Heart right ventricle (tissue), 16 donors: ENCODE measurements at regions of chr18 and their contacts with region 1.

Region 1: DNA sequence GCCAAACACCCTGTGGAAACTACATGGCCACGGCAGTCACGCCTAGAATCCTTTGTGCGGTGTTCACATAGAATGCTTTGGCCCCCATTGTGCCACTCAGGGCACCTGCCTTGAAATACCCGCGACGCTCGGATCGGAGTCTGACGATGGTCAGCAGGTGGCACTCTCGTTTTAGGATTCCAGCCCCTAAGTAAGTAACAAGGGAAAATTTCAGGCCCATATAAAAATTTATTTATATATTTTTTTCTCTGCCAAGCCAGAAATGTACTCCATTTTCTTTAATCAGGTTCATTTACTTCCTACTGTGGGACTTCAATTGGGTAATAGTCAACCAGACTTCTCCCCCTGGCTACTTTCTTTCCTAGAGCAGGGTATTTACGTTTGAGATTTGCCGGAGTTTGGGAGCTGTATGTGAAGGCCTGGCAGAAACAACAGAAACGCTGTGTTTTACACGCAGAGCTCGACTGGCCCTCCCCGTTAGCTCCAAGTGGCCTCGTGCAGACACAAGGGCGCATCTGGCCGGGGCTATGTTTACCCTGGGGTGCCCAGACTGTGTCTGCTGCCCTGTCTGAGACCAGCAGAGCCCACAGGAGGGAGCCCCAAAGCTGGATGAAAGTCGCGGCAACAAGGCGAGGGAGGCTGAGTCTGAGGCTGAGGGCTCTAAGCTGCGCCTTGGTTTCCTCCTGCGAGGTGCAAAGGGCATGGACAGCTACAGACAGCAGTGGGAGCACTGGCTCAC is 41.6 kb downstream of the LRRC30 start:
- DNase-seq: peak; percentile 66 to 69
- ATAC-seq: peak; percentile 66 to 94 (median 88)
- H3K4me3 ChIP-seq: peak overlapping the region in 8 of 10 donors; percentile 15 to 39 (median 34)
- H3K27ac ChIP-seq: peak overlapping the region; percentile 61 to 87 (median 77)
- H3K4me1 ChIP-seq: peaks cover 7 to 26% (median 21%) of the 10 kb centered on the region in 9 donors
- H3K27me3 ChIP-seq: no peaks in the 10 kb centered on the region
- CTCF ChIP-seq: peak; percentile 39 to 74 (median 59)

Region 2: GRCh38 chr18:7370802-7371201 is 98.3 kb after region 1 on chr18:
- intact Hi-C with region 1: loop called in 6 of 10 experiments (anchors 2 to 10 kb)
- DNase-seq: peak; percentile 76 to 89
- ATAC-seq: peak; percentile 82 to 95 (median 91)
- H3K4me3 ChIP-seq: peak overlapping the region in 2 of 10 donors; percentile 7 to 29
- H3K27ac ChIP-seq: peak overlapping the region; percentile 53 to 94 (median 88)
- H3K4me1 ChIP-seq: peaks cover 16 to 81% (median 45%) of the 10 kb centered on the region in 9 donors
- H3K27me3 ChIP-seq: no peaks in the 10 kb centered on the region
- CTCF ChIP-seq: no peak

Region 3: GRCh38 chr18:7383002-7383980 is 110.8 kb after region 1 on chr18:
- intact Hi-C with region 1: no loop called
- DNase-seq: no peak
- ATAC-seq: peak in 7 of 8 donors; percentile 29 to 77 (median 55)
- H3K4me3 ChIP-seq: no peak overlapping the region
- H3K27ac ChIP-seq: peak overlapping the region in 8 of 10 donors; percentile 35 to 76 (median 63)
- H3K4me1 ChIP-seq: peaks cover 0 to 28% (median 11%) of the 10 kb centered on the region in 9 donors
- H3K27me3 ChIP-seq: no peaks in the 10 kb centered on the region
- CTCF ChIP-seq: no peak

Region 4: GRCh38 chr18:7459851-7460770 is 187.6 kb after region 1 on chr18:
- intact Hi-C with region 1: loop called in 4 of 10 experiments (anchors 10 kb)
- DNase-seq: peak in 1 of 2 donors; percentile 50
- ATAC-seq: peak in 7 of 8 donors; percentile 5 to 91 (median 40)
- H3K4me3 ChIP-seq: peak overlapping the region in 8 of 10 donors; percentile 7 to 33 (median 16)
- H3K27ac ChIP-seq: peak overlapping the region; percentile 1 to 81 (median 44)
- H3K4me1 ChIP-seq: peaks cover 0 to 44% (median 18%) of the 10 kb centered on the region in 9 donors
- H3K27me3 ChIP-seq: no peaks in the 10 kb centered on the region
- CTCF ChIP-seq: no peak

Region 5: DNA sequence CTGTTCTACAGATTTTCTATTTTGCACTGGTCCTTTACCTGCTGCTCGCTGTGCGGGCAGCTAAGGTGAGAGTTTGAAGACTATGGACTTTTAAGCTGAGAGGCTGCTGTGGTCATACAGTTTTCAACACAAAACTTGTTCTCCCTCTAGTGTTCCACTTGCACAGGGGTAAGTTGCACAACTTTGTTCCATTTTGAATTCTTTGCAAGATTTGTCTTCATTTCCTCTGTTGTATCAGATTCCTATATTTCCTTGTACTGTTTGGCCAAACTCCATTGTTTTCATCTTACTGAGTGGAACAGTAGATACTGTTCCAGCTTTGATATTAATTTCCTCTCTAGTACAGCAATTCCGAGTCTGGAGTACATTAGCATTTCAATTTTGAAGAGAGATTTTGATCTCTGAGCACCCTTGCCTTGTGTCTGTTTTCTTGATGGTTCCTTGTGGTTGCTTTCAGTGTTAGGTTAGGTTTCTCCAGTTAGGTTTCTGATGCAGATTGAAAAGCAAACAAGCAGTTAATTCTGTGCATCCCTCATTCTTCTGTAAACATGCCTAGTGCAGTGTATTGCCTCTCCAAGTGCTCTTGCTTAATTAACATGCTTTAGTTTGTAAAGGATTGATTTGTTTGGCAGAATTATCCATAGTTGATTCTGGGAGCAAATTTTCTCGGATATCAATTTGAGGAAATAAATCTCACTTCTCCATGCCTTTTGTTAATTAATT is 483.4 kb after region 1 on chr18:
- intact Hi-C with region 1: loop called in 5 of 10 experiments (anchors 5 to 10 kb)
- DNase-seq: no peak
- ATAC-seq: peak in 7 of 8 donors; percentile 41 to 77 (median 63)
- H3K4me3 ChIP-seq: no peak overlapping the region
- H3K27ac ChIP-seq: peak overlapping the region in 5 of 10 donors; percentile 29 to 59 (median 51)
- H3K4me1 ChIP-seq: peaks cover 8 to 86% (median 72%) of the 10 kb centered on the region in 9 donors
- H3K27me3 ChIP-seq: no peaks in the 10 kb centered on the region
- CTCF ChIP-seq: peak; percentile 19 to 60 (median 44)

Region 6: GRCh38 chr18:8478166-8478967 is 1205.9 kb after region 1 on chr18:
- intact Hi-C with region 1: loop called in 7 of 10 experiments (anchors 2 to 10 kb)
- DNase-seq: peak; percentile 54 to 64
- ATAC-seq: peak in 7 of 8 donors; percentile 43 to 74 (median 59)
- H3K4me3 ChIP-seq: no peak overlapping the region
- H3K27ac ChIP-seq: no peak overlapping the region
- H3K4me1 ChIP-seq: peaks cover 0 to 9% (median 0%) of the 10 kb centered on the region in 9 donors
- H3K27me3 ChIP-seq: no peaks in the 10 kb centered on the region
- CTCF ChIP-seq: peak; percentile 61 to 78 (median 72)